Adrenal gland (tissue), 19 donors: ENCODE measurements at regions of chr1 and their contacts with region 1.

Region 1: GRCh38 chr1:227245613-227246320 is 72.5 kb downstream of the CDC42BPA start:
- DNase-seq: no peak
- H3K4me3 ChIP-seq: no peak overlapping the region
- H3K27ac ChIP-seq: no peak overlapping the region
- H3K4me1 ChIP-seq: peaks cover 5 to 28% of the 10 kb centered on the region in 2 donors
- H3K27me3 ChIP-seq: no peaks in the 10 kb centered on the region
- CTCF ChIP-seq: no peak
- POLR2A ChIP-seq: no peak

Region 2: DNA sequence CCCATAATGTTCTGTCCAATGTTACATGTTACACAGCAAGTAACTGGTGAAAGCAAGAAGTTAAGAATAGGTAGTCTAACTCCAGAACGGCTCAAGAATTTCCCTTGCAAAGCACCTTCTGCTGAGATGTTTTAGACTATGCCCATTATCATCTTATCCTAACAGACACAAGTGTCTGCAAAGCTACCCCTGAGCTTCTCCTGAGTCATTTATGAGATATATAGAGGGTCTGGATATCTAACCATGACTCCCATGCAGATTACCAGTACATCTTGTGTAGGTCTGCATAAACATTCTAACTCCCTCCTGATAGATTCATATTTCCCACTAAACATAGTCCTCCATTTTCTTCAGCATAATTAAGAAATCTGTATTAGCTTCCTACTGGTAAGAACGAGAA is 134.0 kb before region 1 on chr1:
- intact Hi-C with region 1: loop called in 1 of 2 experiments (anchors 10 kb)
- DNase-seq: no peak
- H3K4me3 ChIP-seq: no peak overlapping the region
- H3K27ac ChIP-seq: no peak overlapping the region
- H3K4me1 ChIP-seq: no peaks in the 10 kb centered on the region
- H3K27me3 ChIP-seq: no peaks in the 10 kb centered on the region
- CTCF ChIP-seq: no peak
- POLR2A ChIP-seq: no peak

Region 3: DNA sequence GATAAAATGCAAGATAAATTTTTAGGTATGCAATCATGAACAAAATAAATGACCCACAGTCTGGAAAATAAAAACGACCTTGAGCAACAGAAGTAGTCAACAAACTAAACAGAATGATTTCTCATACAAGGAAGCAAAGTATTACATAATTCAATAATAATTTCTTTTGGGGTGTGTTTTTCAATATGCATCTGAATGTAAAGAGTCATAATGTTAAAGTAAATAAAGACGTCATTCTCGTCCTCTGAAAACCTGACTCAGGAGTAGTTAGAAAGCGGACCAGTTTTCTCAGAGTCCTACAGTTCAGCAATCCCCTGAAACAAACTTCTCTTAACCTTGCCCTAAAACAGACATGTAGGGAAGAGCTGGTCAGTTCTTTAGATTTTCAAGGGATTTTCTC is 53.9 kb after region 1 on chr1:
- intact Hi-C with region 1: loop called in 1 of 2 experiments (anchors 10 kb)
- DNase-seq: no peak
- H3K4me3 ChIP-seq: no peak overlapping the region
- H3K27ac ChIP-seq: peak overlapping the region in 3 of 5 donors; percentile 3 to 67 (median 61)
- H3K4me1 ChIP-seq: peaks cover 18 to 20% of the 10 kb centered on the region in 2 donors
- H3K27me3 ChIP-seq: no peaks in the 10 kb centered on the region
- CTCF ChIP-seq: no peak
- POLR2A ChIP-seq: no peak